ENCODE measurements at regions of chr3 and their contacts with region 1.

Region 1: DNA sequence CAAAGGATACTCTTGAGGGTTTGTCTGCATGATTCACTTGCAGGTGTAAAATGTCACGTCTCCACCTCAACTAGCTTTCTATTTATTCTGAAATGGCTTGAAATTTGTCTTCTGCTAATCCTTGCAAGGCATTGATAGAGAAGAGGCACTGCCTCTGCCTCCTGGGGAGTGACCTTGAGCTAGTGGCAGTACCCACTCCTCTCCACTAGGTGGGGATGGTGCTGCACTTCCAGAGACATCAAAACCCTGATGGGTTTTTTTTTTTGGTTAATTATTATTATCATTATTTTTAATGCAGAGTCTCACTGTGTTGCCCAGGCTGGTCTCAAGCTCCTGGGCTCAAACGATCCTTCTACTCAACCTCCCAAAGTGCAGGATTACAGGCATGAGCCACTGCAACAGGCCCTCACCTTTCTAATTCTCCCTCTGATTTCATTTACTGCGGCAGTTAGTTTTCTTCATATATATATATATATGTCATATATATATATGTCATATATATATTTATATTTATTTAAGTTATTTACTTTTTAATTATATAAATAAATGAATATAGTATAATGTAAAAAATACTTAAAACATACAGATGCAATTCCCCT is 117.6 kb upstream of the EIF1B start:
- DNase-seq: no peak
- H3K4me3 ChIP-seq: no peak overlapping the region
- CTCF ChIP-seq: peak; percentile 81

Region 2: GRCh38 chr3:40229386-40229785 is 37.4 kb after region 1 on chr3:
- CTCF ChIA-PET with region 1: no interaction called
- POLR2A ChIA-PET with region 1: no interaction called
- DNase-seq: no peak
- H3K4me3 ChIP-seq: no peak overlapping the region
- CTCF ChIP-seq: no peak

Region 3: DNA sequence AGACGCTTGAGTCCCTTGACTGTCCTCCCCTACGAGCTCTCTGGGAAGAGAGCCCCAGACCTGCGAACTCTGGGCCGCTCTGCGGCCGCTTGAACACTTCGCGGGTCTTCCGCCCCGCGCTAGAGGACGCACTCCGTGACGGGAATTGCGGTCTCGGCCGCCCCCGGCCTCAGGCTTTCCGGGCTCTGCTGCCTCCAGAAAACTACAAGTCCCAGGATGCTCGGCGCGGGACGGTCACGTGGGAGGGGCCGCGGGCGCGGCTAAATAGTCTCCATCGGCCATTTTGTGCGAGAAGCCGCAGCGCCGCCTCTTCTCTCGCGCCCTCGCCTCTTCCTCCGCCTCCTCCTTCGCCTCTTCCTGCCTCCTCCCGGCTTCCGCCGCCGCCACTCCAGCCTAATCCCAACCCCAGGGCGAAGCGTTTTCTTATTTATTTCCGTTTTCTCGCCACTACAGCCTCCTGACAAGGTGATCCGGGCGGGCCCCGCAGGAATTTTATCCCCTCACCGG is 117.5 kb after region 1 on chr3 and contains the start of gene EIF1B:
- CTCF ChIA-PET with region 1: interaction called, 455 read pairs
- POLR2A ChIA-PET with region 1: interaction called, 4 read pairs
- DNase-seq: peak; percentile 79
- H3K4me3 ChIP-seq: peak within 1 kb of the TSS; percentile 82
- CTCF ChIP-seq: peak; percentile 84

Region 4: DNA sequence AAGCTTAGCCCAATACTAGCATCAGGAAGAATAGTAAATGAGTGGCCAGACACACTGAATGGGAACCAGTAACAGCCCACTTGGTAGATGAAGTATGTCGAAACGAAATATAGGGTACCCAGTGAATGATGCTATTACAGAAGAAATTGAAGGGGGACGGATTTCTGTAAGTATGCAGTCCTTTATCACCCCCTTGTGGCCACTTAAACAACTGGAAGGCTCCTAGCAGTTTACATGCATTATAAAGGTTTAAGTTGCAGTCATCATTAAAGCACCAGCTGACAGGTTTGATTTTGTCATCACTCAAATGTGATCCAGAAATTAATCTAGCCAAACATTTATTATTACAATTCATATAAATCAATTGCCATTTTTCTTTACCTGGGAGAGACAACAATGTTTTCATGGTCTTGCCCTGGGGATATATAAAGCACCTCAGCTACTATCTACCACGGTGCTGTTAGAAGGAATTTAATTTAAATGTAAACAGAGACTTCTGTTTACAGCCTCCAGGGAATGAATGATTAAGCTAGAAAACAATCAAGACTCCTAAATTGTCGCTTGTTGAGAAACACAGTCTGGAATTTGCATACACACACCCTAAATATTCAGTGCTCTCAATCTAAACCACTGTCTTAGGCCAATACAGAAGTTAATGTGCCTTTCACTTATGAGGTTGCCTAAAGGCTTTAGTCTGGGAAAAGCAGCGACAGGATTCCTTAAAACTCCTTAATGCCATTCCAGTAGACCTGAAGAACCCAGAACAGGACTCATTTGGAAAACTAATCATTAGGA is 125.3 kb after region 1 on chr3:
- CTCF ChIA-PET with region 1: interaction called, 455 read pairs
- POLR2A ChIA-PET with region 1: interaction called, 4 read pairs
- DNase-seq: peak; percentile 28
- H3K4me3 ChIP-seq: no peak overlapping the region
- CTCF ChIP-seq: peak; percentile 66